ENCODE measurements at regions of chr19 and their contacts with region 1.

Region 1: DNA sequence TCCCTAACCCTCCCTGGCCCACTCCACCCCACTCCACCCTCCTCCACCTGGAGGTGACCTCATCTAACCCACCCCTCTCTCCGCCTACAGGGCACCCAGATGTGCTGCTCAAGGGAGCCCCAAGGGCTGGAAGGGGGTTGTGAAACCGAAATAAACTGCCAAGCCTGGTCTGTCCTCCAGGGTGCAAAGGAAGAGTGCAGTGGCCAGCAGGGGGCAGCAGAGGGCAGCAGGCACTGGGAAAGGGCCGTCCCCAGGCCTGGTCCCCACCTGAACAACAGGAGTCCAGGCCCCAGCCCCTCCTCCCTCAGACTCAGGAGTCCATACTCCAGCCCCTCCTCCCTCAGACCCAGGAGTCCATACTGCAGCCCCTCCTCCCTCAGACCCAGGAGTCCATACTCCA is 8.4 kb upstream of the BCAM start:
- DNase-seq: peak; percentile 86
- ATAC-seq: peak; percentile 91
- H3K4me3 ChIP-seq: peak overlapping the region in 1 of 3 experiments; percentile 60; a peak in 2 of 6 replicates
- H3K27ac ChIP-seq: peak overlapping the region; percentile 85
- H3K4me1 ChIP-seq: peaks cover 64% of the 10 kb centered on the region
- H3K27me3 ChIP-seq: no peaks in the 10 kb centered on the region
- CTCF ChIP-seq: peak; percentile 96
- EP300 ChIP-seq: peak in 1 of 2 experiments; percentile 13; a peak in 1 of 4 replicates
- POLR2A ChIP-seq: no peak
- RAD21 ChIP-seq: peak; percentile 90

Region 2: GRCh38 chr19:44752816-44753618 is 47.4 kb before region 1 on chr19:
- CTCF ChIA-PET with region 1: no interaction called
- POLR2A ChIA-PET with region 1: no interaction called
- in situ Hi-C with region 1: no loop called
- intact Hi-C with region 1: no loop called
- DNase-seq: peak; percentile 50
- ATAC-seq: peak; percentile 31
- H3K4me3 ChIP-seq: no peak overlapping the region
- H3K27ac ChIP-seq: peak overlapping the region; percentile 29
- H3K4me1 ChIP-seq: peaks cover 61% of the 10 kb centered on the region
- H3K27me3 ChIP-seq: no peaks in the 10 kb centered on the region; a peak in 1 of 5 replicates
- CTCF ChIP-seq: no peak
- EP300 ChIP-seq: no peak
- POLR2A ChIP-seq: no peak
- RAD21 ChIP-seq: no peak

Region 3: GRCh38 chr19:44782729-44783128 is 17.7 kb before region 1 on chr19:
- CTCF ChIA-PET with region 1: interaction called, 11 read pairs
- POLR2A ChIA-PET with region 1: interaction called, 14 read pairs
- in situ Hi-C with region 1: no loop called
- intact Hi-C with region 1: loop called (anchors 1 kb)
- DNase-seq: no peak
- ATAC-seq: 0 out of 3 replicates have a peak, but pooled peaks have one; percentile 28
- H3K4me3 ChIP-seq: no peak overlapping the region
- H3K27ac ChIP-seq: peak overlapping the region; percentile 17
- H3K4me1 ChIP-seq: peaks cover 23% of the 10 kb centered on the region
- H3K27me3 ChIP-seq: no peaks in the 10 kb centered on the region
- CTCF ChIP-seq: peak; percentile 23
- EP300 ChIP-seq: no peak
- POLR2A ChIP-seq: no peak
- RAD21 ChIP-seq: no peak